ENCODE measurements at regions of chr3 and their contacts with region 1.

Region 1: GRCh38 chr3:27484015-27484844 is at the start of gene SLC4A7:
- DNase-seq: peak; percentile 99
- H3K4me3 Mint-ChIP-seq: peak within 1 kb of the TSS; percentile 100
- H3K27ac Mint-ChIP-seq: peak within 1 kb of the TSS; percentile 96
- H3K4me1 Mint-ChIP-seq: peaks cover 28% of the 10 kb centered on the region
- H3K27me3 Mint-ChIP-seq: no peaks in the 10 kb centered on the region
- total RNA-seq, gene SLC4A7: 62.1 to 62.3 TPM

Region 2: GRCh38 chr3:27368831-27369607 is 115.2 kb before region 1 on chr3 and contains the start of gene NEK10:
- CTCF ChIA-PET with region 1: no interaction called
- POLR2A ChIA-PET with region 1: interaction called, 7 read pairs
- intact Hi-C with region 1: loop called (anchors 1 kb)
- DNase-seq: peak; percentile 94
- H3K4me3 Mint-ChIP-seq: peak within 1 kb of the TSS; percentile 88
- H3K27ac Mint-ChIP-seq: peak within 1 kb of the TSS; percentile 66
- H3K4me1 Mint-ChIP-seq: peaks cover 9% of the 10 kb centered on the region
- H3K27me3 Mint-ChIP-seq: no peaks in the 10 kb centered on the region
- total RNA-seq, gene NEK10: 0.36 to 0.48 TPM

Region 3: GRCh38 chr3:27467545-27467944 is 16.7 kb before region 1 on chr3:
- CTCF ChIA-PET with region 1: interaction called, 10 read pairs
- POLR2A ChIA-PET with region 1: interaction called, 6 read pairs
- intact Hi-C with region 1: loop called (anchors 1 kb)
- DNase-seq: no peak
- H3K4me3 Mint-ChIP-seq: no peak overlapping the region
- H3K27ac Mint-ChIP-seq: peak overlapping the region; percentile 28
- H3K4me1 Mint-ChIP-seq: peaks cover 14% of the 10 kb centered on the region
- H3K27me3 Mint-ChIP-seq: no peaks in the 10 kb centered on the region

Region 4: GRCh38 chr3:27503526-27503925 is 19.3 kb after region 1 on chr3:
- CTCF ChIA-PET with region 1: no interaction called
- POLR2A ChIA-PET with region 1: no interaction called
- intact Hi-C with region 1: no loop called
- DNase-seq: no peak
- H3K4me3 Mint-ChIP-seq: no peak overlapping the region
- H3K27ac Mint-ChIP-seq: no peak overlapping the region
- H3K4me1 Mint-ChIP-seq: peaks cover 2% of the 10 kb centered on the region
- H3K27me3 Mint-ChIP-seq: no peaks in the 10 kb centered on the region

Region 5: GRCh38 chr3:27590437-27591298 is 106.4 kb after region 1 on chr3:
- CTCF ChIA-PET with region 1: interaction called, 3 read pairs
- POLR2A ChIA-PET with region 1: interaction called, 4 read pairs
- intact Hi-C with region 1: loop called (anchors 1 kb)
- DNase-seq: peak; percentile 13
- H3K4me3 Mint-ChIP-seq: no peak overlapping the region
- H3K27ac Mint-ChIP-seq: peak overlapping the region; percentile 62
- H3K4me1 Mint-ChIP-seq: peaks cover 25% of the 10 kb centered on the region
- H3K27me3 Mint-ChIP-seq: no peaks in the 10 kb centered on the region

Region 6: GRCh38 chr3:27659279-27660021 is 175.2 kb after region 1 on chr3:
- CTCF ChIA-PET with region 1: interaction called, 4 read pairs
- POLR2A ChIA-PET with region 1: no interaction called
- intact Hi-C with region 1: loop called (anchors 5 kb)
- DNase-seq: peak; percentile 56
- H3K4me3 Mint-ChIP-seq: no peak overlapping the region
- H3K27ac Mint-ChIP-seq: no peak overlapping the region
- H3K4me1 Mint-ChIP-seq: peaks cover 8% of the 10 kb centered on the region
- H3K27me3 Mint-ChIP-seq: no peaks in the 10 kb centered on the region

Region 7: GRCh38 chr3:28241221-28242160 is 757.3 kb after region 1 on chr3 and contains the start of gene CMC1:
- CTCF ChIA-PET with region 1: no interaction called
- POLR2A ChIA-PET with region 1: no interaction called
- intact Hi-C with region 1: loop called (anchors 5 kb)
- DNase-seq: peak; percentile 96
- H3K4me3 Mint-ChIP-seq: peak within 1 kb of the TSS; percentile 93
- H3K27ac Mint-ChIP-seq: peak within 1 kb of the TSS; percentile 94
- H3K4me1 Mint-ChIP-seq: peaks cover 38% of the 10 kb centered on the region
- H3K27me3 Mint-ChIP-seq: no peaks in the 10 kb centered on the region
- total RNA-seq, gene CMC1: 27.5 to 28.6 TPM

Measured in activated CD4-positive, alpha-beta memory T cell treated with anti-CD3 and anti-CD28 coated beads for 36 hours (primary cell).